GM13977 (cell line): ENCODE measurements at regions of chr2 and their contacts with region 1.

Region 1: GRCh38 chr2:19863303-19864041 is 38.3 kb downstream of the TTC32 start:
- DNase-seq: peak; percentile 85
- CTCF ChIP-seq: peak; percentile 98

Region 2: GRCh38 chr2:18520451-18521425 is 1342.7 kb before region 1 on chr2:
- in situ Hi-C with region 1: loop called (anchors 25 kb)
- DNase-seq: peak; percentile 55
- CTCF ChIP-seq: peak; percentile 84

Region 3: DNA sequence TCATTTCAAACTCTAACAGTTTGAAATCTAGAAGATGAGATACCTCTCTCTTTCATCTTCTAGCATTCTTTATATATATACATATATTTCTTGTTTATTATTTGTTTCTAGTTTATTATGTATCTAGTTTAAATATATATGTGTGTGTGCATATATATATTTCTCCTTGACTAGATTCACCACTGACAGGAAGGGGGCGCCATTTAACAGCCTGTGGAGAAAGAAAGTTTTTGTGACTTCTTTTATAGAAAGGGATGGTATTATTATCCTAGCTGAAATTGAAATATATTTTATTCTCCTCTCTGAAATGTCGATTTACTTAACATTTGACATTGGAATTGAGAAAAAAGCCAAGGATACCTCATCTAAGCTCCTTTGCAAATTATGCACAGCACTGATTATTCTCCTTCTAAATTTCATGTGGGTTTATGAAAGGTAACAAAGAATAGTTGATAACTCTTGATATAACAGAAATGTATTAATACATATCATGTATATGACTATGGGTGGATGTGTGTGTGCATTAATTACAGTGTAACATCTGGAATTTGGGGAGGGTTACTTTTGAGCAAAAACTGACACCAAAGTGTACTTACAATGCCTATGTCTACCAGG is 1113.5 kb before region 1 on chr2:
- in situ Hi-C with region 1: loop called (anchors 25 kb)
- DNase-seq: peak; percentile 9
- CTCF ChIP-seq: peak; percentile 76